ENCODE measurements at regions of chr11 and their contacts with region 1.

Region 1: GRCh38 chr11:111230122-111230465 is 15.4 kb upstream of the POU2AF2 start:
- DNase-seq: no peak
- H3K4me3 Mint-ChIP-seq: peak overlapping the region; percentile 79
- H3K27ac Mint-ChIP-seq: peak overlapping the region; percentile 85
- H3K4me1 Mint-ChIP-seq: no peaks in the 10 kb centered on the region
- H3K27me3 Mint-ChIP-seq: peaks cover 40% of the 10 kb centered on the region
- CTCF ChIP-seq: no peak

Region 2: DNA sequence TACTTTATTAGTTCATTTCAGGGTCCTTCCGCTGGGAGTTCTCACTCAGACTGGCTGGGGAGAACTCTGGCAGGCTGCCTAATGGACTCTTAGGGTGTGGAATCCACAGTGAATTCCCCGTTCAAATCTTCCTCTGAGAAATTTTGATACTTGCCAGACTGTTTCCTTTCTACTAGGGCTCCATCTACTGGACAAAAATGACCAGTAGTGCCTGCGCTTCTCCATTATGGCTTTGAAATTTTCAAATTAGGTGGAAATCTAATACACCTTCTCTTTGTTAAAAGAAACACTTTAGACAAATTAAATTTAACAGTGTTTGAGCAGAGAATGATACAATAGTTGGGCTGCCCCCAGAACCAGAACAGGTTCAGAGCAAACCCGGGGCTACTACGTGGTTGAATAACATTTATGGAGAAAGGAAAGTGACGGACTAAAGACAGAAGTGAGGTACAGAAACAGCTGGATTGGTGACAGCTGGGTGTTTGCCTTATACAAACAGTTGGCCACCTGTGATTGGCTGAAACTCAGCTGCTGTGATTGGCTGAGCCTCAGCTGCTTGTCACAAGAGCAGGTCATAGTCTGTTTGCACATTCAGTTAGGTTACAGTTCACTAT is 853.3 kb before region 1 on chr11:
- CTCF ChIA-PET with region 1: no interaction called
- POLR2A ChIA-PET with region 1: no interaction called
- intact Hi-C with region 1: loop called (anchors 1 kb)
- DNase-seq: peak; percentile 84
- H3K4me3 Mint-ChIP-seq: no peak overlapping the region
- H3K27ac Mint-ChIP-seq: peak overlapping the region; percentile 61
- H3K4me1 Mint-ChIP-seq: peaks cover 16% of the 10 kb centered on the region
- H3K27me3 Mint-ChIP-seq: no peaks in the 10 kb centered on the region
- CTCF ChIP-seq: peak; percentile 52

Region 3: DNA sequence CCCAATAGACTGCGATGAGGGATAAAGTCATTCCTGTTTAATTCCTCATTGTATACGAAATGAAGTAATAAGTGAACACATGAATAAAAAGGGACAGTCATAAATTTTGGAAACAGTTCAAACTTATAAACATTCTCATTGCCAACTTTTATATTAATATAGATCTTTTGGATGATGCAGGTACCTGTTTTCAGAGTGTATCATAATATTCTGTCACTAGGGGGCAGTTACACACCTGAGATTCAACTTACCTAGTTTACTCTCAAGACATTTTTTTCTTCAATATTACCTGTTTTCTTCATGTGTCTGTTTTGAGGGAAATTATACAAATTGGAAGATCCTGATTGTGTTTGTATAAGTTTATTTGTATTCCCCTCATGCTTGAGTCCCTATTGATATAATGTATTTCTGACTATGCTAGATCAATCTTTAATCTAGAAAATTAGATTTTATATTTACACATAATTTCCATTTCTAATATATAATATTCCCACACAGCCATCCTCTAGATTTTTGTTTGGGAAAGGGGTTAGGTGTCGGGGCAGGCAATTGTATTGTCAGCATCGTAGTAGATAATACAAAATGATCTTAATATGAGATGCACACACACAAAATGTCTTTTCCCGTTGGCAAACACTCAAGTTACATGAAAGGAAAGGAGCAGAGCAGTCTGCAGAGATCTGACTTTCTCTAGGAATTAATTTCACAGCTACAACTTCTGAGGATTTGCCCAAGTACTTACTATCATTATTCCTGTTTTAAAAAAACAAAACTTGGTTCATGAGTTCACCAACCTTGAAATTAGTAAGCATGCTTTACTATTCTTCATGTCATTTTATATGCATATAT is 782.0 kb before region 1 on chr11:
- CTCF ChIA-PET with region 1: interaction called, 33 read pairs
- POLR2A ChIA-PET with region 1: interaction called, 4 read pairs
- intact Hi-C with region 1: loop called (anchors 1 kb)
- DNase-seq: peak; percentile 39
- H3K4me3 Mint-ChIP-seq: no peak overlapping the region
- H3K27ac Mint-ChIP-seq: no peak overlapping the region
- H3K4me1 Mint-ChIP-seq: peaks cover 6% of the 10 kb centered on the region
- H3K27me3 Mint-ChIP-seq: no peaks in the 10 kb centered on the region
- CTCF ChIP-seq: peak; percentile 62

Region 4: DNA sequence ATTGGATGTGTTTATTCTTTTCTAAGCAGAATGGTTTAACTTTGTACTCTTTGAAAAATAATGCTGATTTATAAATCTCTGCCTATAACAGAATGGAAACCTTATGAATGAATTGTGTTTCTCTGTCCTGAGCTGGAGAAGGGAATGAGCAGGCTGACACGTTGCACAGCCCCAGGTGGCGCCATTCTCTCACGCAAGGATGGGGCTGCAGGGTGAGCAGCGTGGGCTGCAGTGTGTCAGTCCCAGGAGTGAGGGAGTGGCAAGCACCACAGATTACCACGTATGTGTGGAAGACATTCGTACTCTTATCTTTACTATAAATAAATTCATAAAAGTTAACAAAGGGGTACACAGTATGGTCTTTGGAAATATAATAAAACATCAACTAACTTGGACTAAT is 766.9 kb before region 1 on chr11:
- CTCF ChIA-PET with region 1: interaction called, 19 read pairs
- POLR2A ChIA-PET with region 1: interaction called, 3 read pairs
- intact Hi-C with region 1: loop called (anchors 1 kb)
- DNase-seq: peak; percentile 52
- H3K4me3 Mint-ChIP-seq: no peak overlapping the region
- H3K27ac Mint-ChIP-seq: no peak overlapping the region
- H3K4me1 Mint-ChIP-seq: no peaks in the 10 kb centered on the region
- H3K27me3 Mint-ChIP-seq: no peaks in the 10 kb centered on the region
- CTCF ChIP-seq: peak; percentile 49

Region 5: DNA sequence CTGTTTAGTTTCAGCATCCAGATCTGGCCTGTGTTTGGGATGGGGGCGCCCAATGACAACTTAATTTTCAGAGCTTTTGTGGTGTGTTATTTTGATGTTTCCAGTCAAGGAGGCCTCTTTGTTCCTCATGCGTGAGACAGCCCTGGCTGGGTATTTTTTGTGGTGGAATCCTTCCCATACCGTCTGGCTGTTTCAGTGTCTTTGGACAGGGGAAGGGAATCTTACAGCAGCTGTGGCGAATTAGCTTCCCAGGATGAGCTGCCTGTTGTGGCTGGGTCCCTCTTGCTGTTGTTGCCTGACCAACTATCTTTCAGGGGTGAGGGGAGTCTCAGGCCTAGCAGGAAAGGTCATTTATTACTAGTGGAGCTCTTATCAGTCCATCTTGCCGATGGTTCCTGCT is 656.7 kb before region 1 on chr11:
- CTCF ChIA-PET with region 1: no interaction called
- POLR2A ChIA-PET with region 1: no interaction called
- intact Hi-C with region 1: loop called (anchors 5 kb)
- DNase-seq: no peak
- H3K4me3 Mint-ChIP-seq: no peak overlapping the region
- H3K27ac Mint-ChIP-seq: no peak overlapping the region
- H3K4me1 Mint-ChIP-seq: no peaks in the 10 kb centered on the region
- H3K27me3 Mint-ChIP-seq: peaks cover 78% of the 10 kb centered on the region
- CTCF ChIP-seq: no peak

Region 6: GRCh38 chr11:110711776-110712658 is 518.1 kb before region 1 on chr11 and contains the start of gene ARHGAP20:
- CTCF ChIA-PET with region 1: no interaction called
- POLR2A ChIA-PET with region 1: no interaction called
- intact Hi-C with region 1: loop called (anchors 10 kb)
- DNase-seq: no peak
- H3K4me3 Mint-ChIP-seq: no peak within 1 kb of the TSS
- H3K27ac Mint-ChIP-seq: no peak within 1 kb of the TSS
- H3K4me1 Mint-ChIP-seq: peaks cover 4% of the 10 kb centered on the region
- H3K27me3 Mint-ChIP-seq: peaks cover 76% of the 10 kb centered on the region
- CTCF ChIP-seq: no peak
- total RNA-seq, gene ARHGAP20: not detected in 2 replicates

Region 7: GRCh38 chr11:111446404-111447111 is 216.5 kb after region 1 on chr11:
- CTCF ChIA-PET with region 1: interaction called, 4 read pairs
- POLR2A ChIA-PET with region 1: no interaction called
- intact Hi-C with region 1: loop called (anchors 1 kb)
- DNase-seq: peak; percentile 90
- H3K4me3 Mint-ChIP-seq: no peak overlapping the region
- H3K27ac Mint-ChIP-seq: no peak overlapping the region
- H3K4me1 Mint-ChIP-seq: peaks cover 8% of the 10 kb centered on the region
- H3K27me3 Mint-ChIP-seq: peaks cover 13% of the 10 kb centered on the region
- CTCF ChIP-seq: peak; percentile 79